PC-9 (cell line): ENCODE measurements at regions of chr15 and their contacts with region 1.

Region 1: GRCh38 chr15:62787401-62787800 is 255.1 kb upstream of the TPM1 start:
- DNase-seq: no peak
- H3K4me3 ChIP-seq: no peak overlapping the region
- H3K27ac ChIP-seq: no peak overlapping the region
- H3K4me1 ChIP-seq: peaks cover 2% of the 10 kb centered on the region
- H3K27me3 ChIP-seq: no peaks in the 10 kb centered on the region
- CTCF ChIP-seq: no peak

Region 2: GRCh38 chr15:63487076-63487757 is 699.8 kb after region 1 on chr15:
- CTCF ChIA-PET with region 1: interaction called, 11 read pairs
- POLR2A ChIA-PET with region 1: no interaction called
- intact Hi-C with region 1: no loop called
- DNase-seq: peak; percentile 43 to 74
- H3K4me3 ChIP-seq: no peak overlapping the region
- H3K27ac ChIP-seq: no peak overlapping the region
- H3K4me1 ChIP-seq: peaks cover 22% of the 10 kb centered on the region
- H3K27me3 ChIP-seq: no peaks in the 10 kb centered on the region
- CTCF ChIP-seq: peak; percentile 79